Activated B cell treated with CpG ODN at 0.5 μM for 24 hours (primary cell): ENCODE measurements at regions of chr2 and their contacts with region 1.

Region 1: GRCh38 chr2:175282290-175282689 is 100.8 kb upstream of the ATP5MC3 start:
- DNase-seq: no peak
- ATAC-seq: peak; percentile 45
- H3K4me3 Mint-ChIP-seq: no peak overlapping the region
- H3K27ac Mint-ChIP-seq: no peak overlapping the region
- H3K4me1 Mint-ChIP-seq: no peaks in the 10 kb centered on the region
- H3K27me3 Mint-ChIP-seq: peaks cover 3% of the 10 kb centered on the region
- CTCF ChIP-seq: no peak

Region 2: GRCh38 chr2:175036582-175037018 is 245.7 kb before region 1 on chr2:
- CTCF ChIA-PET with region 1: interaction called, 3 read pairs
- POLR2A ChIA-PET with region 1: no interaction called
- intact Hi-C with region 1: loop called (anchors 2 kb)
- DNase-seq: no peak
- ATAC-seq: no peak
- H3K4me3 Mint-ChIP-seq: peak overlapping the region; percentile 28
- H3K27ac Mint-ChIP-seq: no peak overlapping the region
- H3K4me1 Mint-ChIP-seq: peaks cover 3% of the 10 kb centered on the region
- H3K27me3 Mint-ChIP-seq: no peaks in the 10 kb centered on the region
- CTCF ChIP-seq: no peak

Region 3: GRCh38 chr2:175203621-175204496 is 78.4 kb before region 1 on chr2:
- CTCF ChIA-PET with region 1: interaction called, 4 read pairs
- POLR2A ChIA-PET with region 1: no interaction called
- intact Hi-C with region 1: loop called (anchors 1 kb)
- DNase-seq: no peak
- ATAC-seq: peak; percentile 79
- H3K4me3 Mint-ChIP-seq: no peak overlapping the region
- H3K27ac Mint-ChIP-seq: no peak overlapping the region
- H3K4me1 Mint-ChIP-seq: no peaks in the 10 kb centered on the region
- H3K27me3 Mint-ChIP-seq: peaks cover 25% of the 10 kb centered on the region
- CTCF ChIP-seq: no peak